ENCODE measurements at regions of chr5 and their contacts with region 1.

Region 1: GRCh38 chr5:82351754-82352145 is 73.6 kb upstream of the RPS23 start:
- DNase-seq: peak in 1 of 2 donors; percentile 35
- ATAC-seq: peak; percentile 52 to 82 (median 70)
- H3K4me3 ChIP-seq: no peak overlapping the region
- H3K27ac ChIP-seq: peak overlapping the region in 6 of 10 donors; percentile 27 to 76 (median 51)
- H3K4me1 ChIP-seq: peaks cover 2 to 60% (median 31%) of the 10 kb centered on the region in 9 donors
- H3K27me3 ChIP-seq: no peaks in the 10 kb centered on the region
- CTCF ChIP-seq: peak; percentile 63 to 86 (median 79)

Region 2: DNA sequence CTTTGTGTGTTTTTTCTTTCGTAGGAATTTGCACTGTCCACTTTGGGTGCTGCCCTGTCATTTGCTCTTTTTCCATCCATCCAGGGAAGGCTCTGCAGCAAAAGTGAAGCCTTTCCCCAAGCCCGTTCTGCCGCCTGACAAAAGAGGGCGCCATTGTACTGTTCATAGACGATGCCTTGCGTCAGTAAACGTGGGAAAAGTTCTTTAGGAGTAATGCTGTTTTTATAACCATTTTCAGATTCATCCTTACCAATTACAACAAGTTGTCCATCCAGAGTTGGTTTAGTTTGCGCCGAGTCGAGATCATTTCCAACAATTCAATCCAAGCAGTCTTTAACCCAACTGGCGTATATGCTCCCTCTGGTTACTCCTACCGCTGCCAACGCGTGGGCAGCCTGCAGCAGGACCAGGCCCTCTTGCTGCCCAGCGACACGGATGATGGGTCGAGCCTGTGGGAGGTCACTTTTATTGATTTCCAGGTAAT is 39.3 kb before region 1 on chr5:
- intact Hi-C with region 1: loop called in 1 of 10 experiments (anchors 5 kb)
- DNase-seq: peak; percentile 54 to 64
- ATAC-seq: peak; percentile 68 to 90 (median 82)
- H3K4me3 ChIP-seq: peak overlapping the region in 2 of 10 donors; percentile 11 to 30
- H3K27ac ChIP-seq: peak overlapping the region in 7 of 10 donors; percentile 12 to 65 (median 37)
- H3K4me1 ChIP-seq: peaks cover 0 to 14% (median 10%) of the 10 kb centered on the region in 9 donors
- H3K27me3 ChIP-seq: no peaks in the 10 kb centered on the region
- CTCF ChIP-seq: peak; percentile 58 to 93 (median 80)

Region 3: DNA sequence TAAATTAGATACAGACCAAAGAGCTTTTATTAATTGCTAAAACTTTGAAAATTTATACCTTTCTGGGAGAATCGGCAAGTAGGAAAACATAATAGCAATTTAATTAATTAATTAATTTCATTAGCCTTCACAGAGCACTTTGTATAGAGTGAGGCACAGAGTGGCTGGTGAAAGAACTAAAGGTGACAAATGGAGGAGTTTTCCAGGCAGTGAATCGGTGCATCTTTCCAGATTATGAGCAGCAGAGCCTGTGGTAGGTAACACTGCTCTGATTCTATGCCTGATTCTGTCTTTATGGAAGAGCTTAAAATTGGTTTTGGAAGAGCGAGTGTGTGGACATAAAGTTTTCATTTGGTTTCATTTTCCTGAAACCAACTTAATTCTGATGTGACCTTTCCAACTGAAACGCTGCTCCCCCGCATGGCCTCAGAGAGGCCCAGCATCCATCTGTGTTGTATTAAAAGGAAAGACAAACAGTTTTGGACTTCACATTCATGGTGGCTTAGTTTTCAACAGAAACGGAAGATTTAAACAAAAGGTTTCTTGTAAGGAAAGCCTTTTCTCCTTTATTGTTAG is 115.3 kb after region 1 on chr5:
- intact Hi-C with region 1: loop called in 1 of 10 experiments (anchors 10 kb)
- DNase-seq: no peak
- ATAC-seq: peak in 4 of 8 donors; percentile 46 to 70 (median 49)
- H3K4me3 ChIP-seq: peak overlapping the region in 4 of 10 donors; percentile 25 to 33 (median 30)
- H3K27ac ChIP-seq: peak overlapping the region in 6 of 10 donors; percentile 45 to 72 (median 56)
- H3K4me1 ChIP-seq: peaks cover 0 to 3% (median 0%) of the 10 kb centered on the region in 9 donors
- H3K27me3 ChIP-seq: no peaks in the 10 kb centered on the region
- CTCF ChIP-seq: peak in 7 of 9 donors; percentile 8 to 47 (median 29)

Region 4: GRCh38 chr5:82635561-82636288 is 284.0 kb after region 1 on chr5:
- intact Hi-C with region 1: loop called in 6 of 10 experiments (anchors 5 kb)
- DNase-seq: no peak
- ATAC-seq: no peak
- H3K4me3 ChIP-seq: no peak overlapping the region
- H3K27ac ChIP-seq: no peak overlapping the region
- H3K4me1 ChIP-seq: peaks cover 0 to 15% (median 8%) of the 10 kb centered on the region in 9 donors
- H3K27me3 ChIP-seq: no peaks in the 10 kb centered on the region
- CTCF ChIP-seq: no peak

Region 5: GRCh38 chr5:82793808-82794419 is 442.2 kb after region 1 on chr5:
- intact Hi-C with region 1: loop called in 4 of 10 experiments (anchors 2 to 10 kb)
- DNase-seq: peak in 1 of 2 donors; percentile 6
- ATAC-seq: no peak
- H3K4me3 ChIP-seq: no peak overlapping the region
- H3K27ac ChIP-seq: no peak overlapping the region
- H3K4me1 ChIP-seq: no peaks in the 10 kb centered on the region
- H3K27me3 ChIP-seq: no peaks in the 10 kb centered on the region
- CTCF ChIP-seq: peak; percentile 33 to 74 (median 66)

Region 6: GRCh38 chr5:83430130-83431010 is 1078.6 kb after region 1 on chr5:
- intact Hi-C with region 1: loop called in 3 of 10 experiments (anchors 5 to 10 kb)
- DNase-seq: peak in 1 of 2 donors; percentile 60
- ATAC-seq: peak in 7 of 8 donors; percentile 52 to 88 (median 82)
- H3K4me3 ChIP-seq: no peak overlapping the region
- H3K27ac ChIP-seq: no peak overlapping the region
- H3K4me1 ChIP-seq: peaks cover 0 to 8% (median 0%) of the 10 kb centered on the region in 9 donors
- H3K27me3 ChIP-seq: no peaks in the 10 kb centered on the region
- CTCF ChIP-seq: peak; percentile 57 to 93 (median 86)

Region 7: DNA sequence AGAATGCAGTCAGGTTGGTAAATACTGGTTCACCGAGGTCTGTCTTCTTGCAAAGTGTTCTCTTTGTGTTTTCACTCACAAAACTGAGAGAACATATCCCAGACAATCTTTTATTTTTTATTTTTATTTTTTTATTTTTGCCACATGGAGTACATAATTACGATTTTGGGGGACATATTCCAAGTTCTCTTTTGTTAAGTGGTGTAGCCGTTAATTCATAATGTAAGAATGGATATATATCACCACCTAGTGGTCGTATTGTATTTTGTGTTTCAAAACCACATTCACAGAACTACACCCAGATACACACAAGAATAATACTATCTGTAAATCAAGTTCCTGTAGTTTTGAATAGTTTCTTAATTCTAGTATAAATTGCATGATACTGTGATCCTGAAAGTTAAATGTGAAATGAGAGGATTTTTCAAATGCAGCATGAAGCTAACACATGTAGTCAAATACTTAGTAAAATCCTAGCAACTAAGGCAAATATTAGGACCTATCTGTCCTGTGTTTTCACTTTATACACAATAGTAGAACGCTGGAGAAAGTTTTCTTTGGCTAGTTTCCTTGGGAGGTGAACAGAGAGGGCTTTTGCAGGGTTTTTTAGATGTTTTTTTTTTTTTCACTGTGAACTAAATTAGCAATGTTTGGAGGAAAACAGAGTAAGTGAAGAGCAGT is 1212.5 kb after region 1 on chr5:
- intact Hi-C with region 1: loop called (anchors 2 to 10 kb)
- DNase-seq: no peak
- ATAC-seq: peak; percentile 43 to 76 (median 62)
- H3K4me3 ChIP-seq: no peak overlapping the region
- H3K27ac ChIP-seq: peak overlapping the region in 1 of 10 donors; percentile 36
- H3K4me1 ChIP-seq: peaks cover 0 to 17% (median 5%) of the 10 kb centered on the region in 9 donors
- H3K27me3 ChIP-seq: no peaks in the 10 kb centered on the region
- CTCF ChIP-seq: peak; percentile 55 to 79 (median 65)

Measured in heart right ventricle (tissue), 16 donors.